ENCODE measurements at regions of chr12 and their contacts with region 1.

Region 1: DNA sequence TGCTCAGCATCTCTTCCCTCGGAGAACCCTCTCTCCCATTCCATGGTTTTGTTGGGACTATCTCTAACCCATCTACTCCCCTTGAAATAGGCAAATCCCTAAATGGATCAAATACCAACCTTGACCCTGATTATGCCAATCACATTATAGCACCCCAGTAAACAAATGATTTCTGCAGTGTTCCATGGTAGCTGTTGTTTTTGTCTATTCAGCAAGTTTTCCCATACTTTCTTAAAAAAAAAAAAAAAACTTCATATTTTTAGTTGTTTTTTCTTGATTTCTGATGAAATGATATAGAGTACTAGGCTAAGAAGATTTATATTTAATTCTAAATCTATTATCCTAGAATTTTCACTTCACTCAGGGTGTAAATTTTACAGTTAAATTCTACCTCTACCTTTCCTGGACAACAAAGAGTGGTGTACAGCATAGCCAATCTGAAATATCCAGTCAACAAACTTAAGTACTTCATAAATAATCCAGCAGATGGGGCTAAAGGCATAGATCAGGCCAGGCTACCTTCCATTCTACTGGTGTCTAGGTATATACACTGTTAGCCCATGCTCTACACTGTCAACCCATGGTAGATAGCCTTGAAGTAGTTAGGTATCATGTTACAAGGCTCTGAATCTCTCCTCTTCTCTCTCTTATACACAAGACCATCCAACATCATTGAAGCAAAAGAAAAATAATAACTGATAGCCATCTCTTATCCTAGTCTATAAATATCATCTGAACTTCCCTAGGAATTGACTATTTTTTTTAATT is 82.2 kb downstream of the PLEKHG7 start:
- DNase-seq: peak; percentile 39 to 84
- H3K4me3 ChIP-seq: no peak overlapping the region
- H3K4me1 ChIP-seq: no peaks in the 10 kb centered on the region
- H3K27me3 ChIP-seq: no peaks in the 10 kb centered on the region

Region 2: GRCh38 chr12:92928962-92929915 is 144.3 kb after region 1 on chr12 and contains the start of gene EEA1:
- in situ Hi-C with region 1: no loop called
- DNase-seq: peak; percentile 94 to 97
- H3K4me3 ChIP-seq: peak within 1 kb of the TSS; percentile 58
- H3K4me1 ChIP-seq: peaks cover 42% of the 10 kb centered on the region
- H3K27me3 ChIP-seq: no peaks in the 10 kb centered on the region

Region 3: GRCh38 chr12:93419388-93420034 is 634.5 kb after region 1 on chr12:
- in situ Hi-C with region 1: loop called (anchors 25 kb)
- DNase-seq: peak in 1 of 2 experiments; percentile 57
- H3K4me3 ChIP-seq: no peak overlapping the region
- H3K4me1 ChIP-seq: peaks cover 34% of the 10 kb centered on the region
- H3K27me3 ChIP-seq: no peaks in the 10 kb centered on the region